ENCODE measurements at regions of chr13 and their contacts with region 1.

Region 1: DNA sequence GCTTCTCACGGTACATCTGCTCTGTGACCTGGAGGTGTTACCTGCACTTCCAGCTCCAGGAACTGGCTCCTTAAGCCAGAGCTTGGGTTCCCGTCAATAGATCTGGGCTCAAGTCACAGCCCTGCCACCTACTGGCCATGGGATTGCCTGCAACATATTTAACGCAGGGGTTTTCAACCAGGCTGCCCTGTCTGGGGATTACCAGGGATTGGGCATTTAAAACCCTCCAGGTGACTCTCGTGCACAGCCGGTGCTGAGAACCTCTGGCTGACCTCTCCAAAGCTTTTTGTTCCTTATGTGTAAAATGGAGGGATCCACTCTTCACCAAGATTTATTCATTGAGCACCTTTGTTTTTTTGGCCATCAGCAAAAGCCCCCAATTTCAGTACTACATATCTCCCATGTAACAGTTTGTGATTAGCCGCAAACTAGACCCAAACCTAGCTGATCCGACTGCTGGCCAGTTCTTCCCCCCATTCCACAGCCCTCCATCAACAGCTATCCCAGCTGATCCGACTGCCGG is 76.6 kb upstream of the STK24 start:
- DNase-seq: peak; percentile 61 to 73 (median 64)
- H3K4me3 ChIP-seq: no peak overlapping the region
- H3K4me3 Mint-ChIP-seq: peak overlapping the region in 6 of 8 donors; percentile 42 to 84 (median 64)
- H3K27ac ChIP-seq: no peak overlapping the region
- H3K27ac Mint-ChIP-seq: peak overlapping the region in 3 of 7 donors; percentile 1 to 73 (median 68)
- H3K4me1 ChIP-seq: peaks cover 5% of the 10 kb centered on the region
- H3K4me1 Mint-ChIP-seq: peaks cover 0 to 7% (median 3%) of the 10 kb centered on the region in 4 donors
- H3K27me3 ChIP-seq: no peaks in the 10 kb centered on the region
- H3K27me3 Mint-ChIP-seq: peaks cover 0 to 3% of the 10 kb centered on the region in 2 donors

Region 2: DNA sequence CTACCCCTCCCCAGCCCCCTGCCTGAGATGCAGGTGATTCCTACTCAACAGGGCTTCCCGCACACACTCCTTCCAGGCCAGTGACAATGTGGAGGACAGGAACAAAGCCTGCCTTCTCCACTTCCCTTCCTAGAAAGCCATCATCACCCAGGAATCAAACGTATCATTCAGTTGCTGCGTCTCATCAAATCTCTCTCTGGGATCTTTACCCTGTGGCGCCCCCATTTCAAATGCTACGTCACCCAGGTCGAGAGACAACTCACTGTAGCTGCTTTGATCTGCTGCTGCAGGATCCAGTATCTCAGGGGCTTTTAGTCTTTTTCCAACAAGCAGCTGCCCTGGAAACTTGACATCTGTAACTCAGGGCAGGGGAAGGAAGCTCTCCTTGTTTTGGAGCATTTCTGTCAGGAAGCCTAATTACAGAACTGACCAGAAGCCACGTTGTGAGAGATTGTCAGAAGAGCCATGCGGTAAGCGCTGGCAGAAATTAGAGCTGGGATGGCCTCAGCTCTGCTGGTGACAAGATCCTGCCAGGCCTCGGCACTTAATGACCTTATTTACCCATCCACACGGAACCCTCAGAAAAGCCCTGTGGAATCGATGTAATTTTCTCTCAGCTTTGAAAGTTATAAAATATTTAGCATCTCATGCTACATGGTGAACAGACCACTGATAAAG is 217.2 kb before region 1 on chr13:
- CTCF ChIA-PET with region 1: interaction called, 345 read pairs
- POLR2A ChIA-PET with region 1: no interaction called
- intact Hi-C with region 1: no loop called
- DNase-seq: no peak
- H3K4me3 ChIP-seq: no peak overlapping the region
- H3K4me3 Mint-ChIP-seq: no peak overlapping the region
- H3K27ac ChIP-seq: no peak overlapping the region
- H3K27ac Mint-ChIP-seq: no peak overlapping the region
- H3K4me1 ChIP-seq: no peaks in the 10 kb centered on the region
- H3K4me1 Mint-ChIP-seq: peaks cover 0 to 4% (median 0%) of the 10 kb centered on the region in 4 donors
- H3K27me3 ChIP-seq: no peaks in the 10 kb centered on the region
- H3K27me3 Mint-ChIP-seq: peaks cover 1 to 17% of the 10 kb centered on the region in 2 donors

Region 3: DNA sequence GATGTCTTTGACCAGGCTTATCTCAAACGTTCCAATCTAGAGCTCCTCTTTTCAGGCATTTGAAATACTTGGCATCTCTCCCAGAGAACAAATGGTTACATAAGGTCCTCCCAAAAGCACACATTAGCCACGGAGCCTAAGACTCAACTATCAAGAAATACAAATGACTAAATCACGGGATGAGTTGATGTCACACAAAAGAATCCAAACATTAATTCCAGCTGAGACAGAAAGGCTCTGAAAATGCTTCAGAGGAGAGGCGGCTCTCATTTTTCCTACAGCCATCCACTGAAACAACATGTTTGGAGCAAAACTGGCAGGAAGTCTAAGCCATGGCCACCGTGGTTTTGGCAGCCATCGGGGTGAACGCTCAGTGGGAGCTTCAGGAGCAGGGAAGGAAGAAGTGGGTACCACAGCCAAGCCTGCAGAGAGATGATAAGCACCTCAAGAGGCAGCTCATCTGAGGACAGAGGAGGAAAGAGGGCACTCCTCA is 199.1 kb before region 1 on chr13:
- CTCF ChIA-PET with region 1: interaction called, 39 read pairs
- POLR2A ChIA-PET with region 1: interaction called, 4 read pairs
- intact Hi-C with region 1: no loop called
- DNase-seq: no peak
- H3K4me3 ChIP-seq: no peak overlapping the region
- H3K4me3 Mint-ChIP-seq: no peak overlapping the region
- H3K27ac ChIP-seq: no peak overlapping the region
- H3K27ac Mint-ChIP-seq: peak overlapping the region in 6 of 7 donors; percentile 3 to 62 (median 50)
- H3K4me1 ChIP-seq: peaks cover 18% of the 10 kb centered on the region
- H3K4me1 Mint-ChIP-seq: peaks cover 16 to 19% (median 17%) of the 10 kb centered on the region in 4 donors
- H3K27me3 ChIP-seq: no peaks in the 10 kb centered on the region
- H3K27me3 Mint-ChIP-seq: no peaks in the 10 kb centered on the region

Region 4: DNA sequence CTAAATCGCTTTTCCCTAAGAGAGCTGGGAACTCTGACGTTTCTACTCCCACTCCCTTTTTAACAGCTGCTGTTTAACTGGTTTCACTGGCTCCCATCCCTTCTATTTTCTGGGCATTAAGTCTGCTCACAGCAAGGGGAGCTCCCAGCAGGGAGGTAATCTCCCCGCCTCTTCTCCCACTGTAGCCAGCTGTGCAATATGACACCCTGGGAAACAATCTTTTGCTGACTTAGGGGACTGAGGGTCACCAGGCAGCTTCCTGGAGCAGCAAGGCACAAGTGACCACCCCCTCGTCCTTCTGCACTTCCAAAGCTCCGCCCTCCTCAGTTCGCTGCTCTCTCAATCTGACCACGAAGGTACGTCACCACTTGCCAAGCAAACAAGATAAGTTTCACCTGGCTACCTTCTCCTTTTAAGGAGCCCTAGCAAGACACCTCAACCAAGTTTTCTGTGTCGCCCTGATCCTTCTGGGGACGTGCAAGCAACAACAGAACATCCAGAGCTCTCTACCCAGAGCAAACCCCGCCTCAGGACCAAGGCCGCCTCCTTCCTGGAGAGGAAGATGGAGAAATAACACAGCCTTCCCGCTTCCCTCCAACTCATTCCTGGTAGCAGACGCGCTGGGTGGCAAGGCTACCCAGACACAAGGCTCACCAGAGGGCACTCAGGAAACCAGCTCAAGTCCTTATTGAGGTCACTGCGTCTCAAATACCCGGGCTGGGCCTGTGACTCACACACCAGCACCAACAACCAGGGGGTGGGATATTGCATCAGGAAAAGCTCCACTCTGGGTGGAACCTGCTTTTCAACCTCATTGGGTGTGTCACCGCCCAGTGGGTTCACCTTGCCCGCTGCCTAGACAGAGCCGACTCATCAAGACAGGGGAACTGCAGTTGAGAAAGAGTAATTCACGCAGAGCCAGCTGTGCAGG is 169.0 kb before region 1 on chr13:
- CTCF ChIA-PET with region 1: interaction called, 101 read pairs
- POLR2A ChIA-PET with region 1: no interaction called
- intact Hi-C with region 1: no loop called
- DNase-seq: peak; percentile 59 to 93 (median 67)
- H3K4me3 ChIP-seq: no peak overlapping the region
- H3K4me3 Mint-ChIP-seq: peak overlapping the region; percentile 3 to 88 (median 80)
- H3K27ac ChIP-seq: peak overlapping the region; percentile 50
- H3K27ac Mint-ChIP-seq: peak overlapping the region; percentile 90 to 98 (median 95)
- H3K4me1 ChIP-seq: peaks cover 94% of the 10 kb centered on the region
- H3K4me1 Mint-ChIP-seq: peaks cover 64 to 93% (median 82%) of the 10 kb centered on the region in 4 donors
- H3K27me3 ChIP-seq: no peaks in the 10 kb centered on the region
- H3K27me3 Mint-ChIP-seq: no peaks in the 10 kb centered on the region

Region 5: DNA sequence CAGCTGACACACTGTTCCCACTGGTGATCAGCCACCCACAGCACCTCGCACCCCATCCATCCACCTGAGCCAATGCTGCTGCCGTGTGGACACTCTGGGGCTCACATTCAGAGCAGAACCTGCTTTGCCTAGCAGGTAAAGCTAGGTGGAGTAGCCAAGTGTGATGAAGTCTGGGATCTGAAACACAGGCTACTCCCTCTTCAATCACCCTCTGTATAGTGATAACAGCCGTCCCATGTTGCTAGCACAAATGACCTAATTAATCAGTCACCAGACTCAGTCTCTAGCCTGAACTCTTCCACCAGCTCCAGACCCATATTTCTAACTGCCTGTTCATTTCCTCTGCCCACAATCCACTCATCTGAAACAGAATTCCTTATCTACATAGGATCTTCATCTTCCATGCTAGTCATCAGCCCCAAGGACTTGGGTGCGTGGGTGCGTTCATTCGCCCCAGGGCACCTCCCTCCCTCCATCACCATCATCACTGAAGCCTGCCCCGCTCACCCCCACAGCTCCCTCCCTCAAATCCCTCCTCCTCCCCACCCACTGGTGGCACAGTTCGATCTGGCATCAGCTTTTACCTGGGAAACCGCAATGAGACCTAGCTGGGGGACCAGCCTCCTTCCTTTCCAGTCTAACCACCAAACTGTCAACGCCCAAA is 96.4 kb before region 1 on chr13:
- CTCF ChIA-PET with region 1: interaction called, 12 read pairs
- POLR2A ChIA-PET with region 1: no interaction called
- intact Hi-C with region 1: no loop called
- DNase-seq: peak in 4 of 5 donors; percentile 42 to 67 (median 48)
- H3K4me3 ChIP-seq: no peak overlapping the region
- H3K4me3 Mint-ChIP-seq: peak overlapping the region; percentile 55 to 78 (median 72)
- H3K27ac ChIP-seq: peak overlapping the region; percentile 37
- H3K27ac Mint-ChIP-seq: peak overlapping the region; percentile 70 to 95 (median 84)
- H3K4me1 ChIP-seq: peaks cover 92% of the 10 kb centered on the region
- H3K4me1 Mint-ChIP-seq: peaks cover 67 to 93% (median 78%) of the 10 kb centered on the region in 4 donors
- H3K27me3 ChIP-seq: no peaks in the 10 kb centered on the region
- H3K27me3 Mint-ChIP-seq: no peaks in the 10 kb centered on the region

Region 6: GRCh38 chr13:98576963-98577822 is 76.3 kb before region 1 on chr13 and contains the start of gene STK24:
- CTCF ChIA-PET with region 1: interaction called, 5 read pairs
- POLR2A ChIA-PET with region 1: interaction called, 10 read pairs
- intact Hi-C with region 1: loop called (anchors 2 kb)
- DNase-seq: peak; percentile 52 to 73 (median 56)
- H3K4me3 ChIP-seq: peak within 1 kb of the TSS; percentile 74 to 75
- H3K4me3 Mint-ChIP-seq: peak within 1 kb of the TSS; percentile 89 to 97 (median 95)
- H3K27ac ChIP-seq: peak within 1 kb of the TSS; percentile 81
- H3K27ac Mint-ChIP-seq: peak within 1 kb of the TSS; percentile 92 to 97 (median 95)
- H3K4me1 ChIP-seq: peaks cover 34% of the 10 kb centered on the region
- H3K4me1 Mint-ChIP-seq: peaks cover 21 to 42% (median 33%) of the 10 kb centered on the region in 4 donors
- H3K27me3 ChIP-seq: no peaks in the 10 kb centered on the region
- H3K27me3 Mint-ChIP-seq: no peaks in the 10 kb centered on the region
- total RNA-seq, gene STK24: 146 to 147 TPM

Region 7: DNA sequence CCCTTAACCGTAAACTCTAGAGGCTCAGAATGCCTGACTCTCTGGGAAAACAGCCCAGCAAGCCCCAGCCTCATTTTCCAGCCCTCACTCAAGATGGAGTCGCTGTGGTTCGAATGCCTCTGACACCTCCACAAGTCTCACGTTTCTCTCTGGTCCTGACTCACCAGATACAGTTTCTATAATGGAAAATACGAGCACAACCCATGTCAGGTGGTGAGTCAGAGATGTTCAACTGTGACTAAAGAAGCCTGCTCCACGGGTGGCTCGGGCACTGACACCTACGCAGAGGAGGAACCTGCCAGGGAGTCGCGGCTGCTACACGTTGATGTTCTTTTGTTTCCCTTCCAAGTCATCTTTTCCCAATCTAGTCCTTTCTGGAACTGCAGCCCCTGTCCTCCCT is 10.5 kb after region 1 on chr13:
- CTCF ChIA-PET with region 1: interaction called, 14 read pairs
- POLR2A ChIA-PET with region 1: no interaction called
- intact Hi-C with region 1: no loop called
- DNase-seq: peak in 1 of 5 donors; percentile 46
- H3K4me3 ChIP-seq: no peak overlapping the region
- H3K4me3 Mint-ChIP-seq: peak overlapping the region in 4 of 8 donors; percentile 5 to 54 (median 28)
- H3K27ac ChIP-seq: no peak overlapping the region
- H3K27ac Mint-ChIP-seq: no peak overlapping the region
- H3K4me1 ChIP-seq: peaks cover 5% of the 10 kb centered on the region
- H3K4me1 Mint-ChIP-seq: peaks cover 5 to 9% (median 7%) of the 10 kb centered on the region in 4 donors
- H3K27me3 ChIP-seq: no peaks in the 10 kb centered on the region
- H3K27me3 Mint-ChIP-seq: peaks cover 2 to 5% of the 10 kb centered on the region in 2 donors